ENCODE measurements at regions of chr2 and their contacts with region 1.

Region 1: GRCh38 chr2:27281855-27282559 is at the start of gene TRIM54:
- DNase-seq: no peak
- ATAC-seq: no peak
- H3K4me3 ChIP-seq: no peak within 1 kb of the TSS
- H3K27ac ChIP-seq: no peak within 1 kb of the TSS
- H3K4me1 ChIP-seq: peaks cover 2 to 28% of the 10 kb centered on the region in 2 experiments
- H3K27me3 ChIP-seq: no peaks in the 10 kb centered on the region
- CTCF ChIP-seq: no peak
- POLR2A ChIP-seq: no peak
- RAD21 ChIP-seq: no peak
- total RNA-seq, gene TRIM54: 2.0 TPM

Region 2: GRCh38 chr2:26970244-26970920 is 311.6 kb before region 1 on chr2 and contains the start of gene MAPRE3:
- CTCF ChIA-PET with region 1: no interaction called
- POLR2A ChIA-PET with region 1: no interaction called
- RAD21 ChIA-PET with region 1: no interaction called
- intact Hi-C with region 1: loop called (anchors 5 kb)
- DNase-seq: peak; percentile 53
- ATAC-seq: peak; percentile 94
- H3K4me3 ChIP-seq: peak within 1 kb of the TSS; percentile 44 to 62
- H3K27ac ChIP-seq: no peak within 1 kb of the TSS
- H3K4me1 ChIP-seq: peaks cover 4 to 23% of the 10 kb centered on the region in 2 experiments; a peak in 3 of 4 replicates
- H3K27me3 ChIP-seq: peaks cover 5% of the 10 kb centered on the region; the same call in 1 of the 2 replicates
- CTCF ChIP-seq: no peak
- POLR2A ChIP-seq: no peak
- RAD21 ChIP-seq: no peak
- total RNA-seq, gene MAPRE3: 12.1 TPM

Region 3: DNA sequence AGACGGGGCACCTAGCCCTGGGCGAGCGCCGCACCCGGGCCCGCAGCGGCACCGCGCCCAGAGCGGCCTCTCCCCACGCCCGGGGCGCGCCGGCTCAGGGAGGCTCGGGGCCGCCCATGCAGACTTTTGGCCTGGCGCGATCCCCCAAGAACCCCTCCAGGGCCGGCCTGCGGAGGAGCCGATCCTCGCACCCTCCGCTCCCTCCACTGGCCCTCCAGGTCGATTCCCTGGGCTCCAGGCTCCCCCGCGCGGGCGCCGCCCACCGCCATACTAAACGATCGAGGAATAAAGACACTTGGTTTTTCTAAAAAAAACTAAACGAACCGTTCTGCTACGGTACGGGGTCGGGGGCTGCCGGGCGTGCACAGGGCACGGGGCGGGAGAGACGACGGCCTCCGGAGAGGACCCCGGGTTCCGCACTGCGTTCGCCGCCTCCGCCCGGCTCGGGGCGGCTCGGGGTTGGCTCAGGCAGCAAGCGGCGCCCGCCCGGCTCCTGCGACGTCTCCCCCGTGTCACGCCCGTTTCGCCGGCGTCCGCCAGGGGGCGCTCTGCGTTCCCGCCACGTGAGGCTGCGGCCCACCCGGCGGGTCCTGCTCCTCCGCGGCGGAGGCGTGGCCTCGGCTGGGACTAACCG is 195.8 kb before region 1 on chr2:
- CTCF ChIA-PET with region 1: interaction called, 10 read pairs
- POLR2A ChIA-PET with region 1: no interaction called
- RAD21 ChIA-PET with region 1: no interaction called
- intact Hi-C with region 1: no loop called
- DNase-seq: peak; percentile 77
- ATAC-seq: peak; percentile 85
- H3K4me3 ChIP-seq: peak overlapping the region; percentile 57 to 61
- H3K27ac ChIP-seq: peak overlapping the region; percentile 77
- H3K4me1 ChIP-seq: peaks cover 13 to 35% of the 10 kb centered on the region in 2 experiments
- H3K27me3 ChIP-seq: no peaks in the 10 kb centered on the region
- CTCF ChIP-seq: peak in 2 of 3 experiments; percentile 53 to 73; a peak in 4 of 6 replicates
- POLR2A ChIP-seq: peak; percentile 32
- RAD21 ChIP-seq: no peak

Region 4: DNA sequence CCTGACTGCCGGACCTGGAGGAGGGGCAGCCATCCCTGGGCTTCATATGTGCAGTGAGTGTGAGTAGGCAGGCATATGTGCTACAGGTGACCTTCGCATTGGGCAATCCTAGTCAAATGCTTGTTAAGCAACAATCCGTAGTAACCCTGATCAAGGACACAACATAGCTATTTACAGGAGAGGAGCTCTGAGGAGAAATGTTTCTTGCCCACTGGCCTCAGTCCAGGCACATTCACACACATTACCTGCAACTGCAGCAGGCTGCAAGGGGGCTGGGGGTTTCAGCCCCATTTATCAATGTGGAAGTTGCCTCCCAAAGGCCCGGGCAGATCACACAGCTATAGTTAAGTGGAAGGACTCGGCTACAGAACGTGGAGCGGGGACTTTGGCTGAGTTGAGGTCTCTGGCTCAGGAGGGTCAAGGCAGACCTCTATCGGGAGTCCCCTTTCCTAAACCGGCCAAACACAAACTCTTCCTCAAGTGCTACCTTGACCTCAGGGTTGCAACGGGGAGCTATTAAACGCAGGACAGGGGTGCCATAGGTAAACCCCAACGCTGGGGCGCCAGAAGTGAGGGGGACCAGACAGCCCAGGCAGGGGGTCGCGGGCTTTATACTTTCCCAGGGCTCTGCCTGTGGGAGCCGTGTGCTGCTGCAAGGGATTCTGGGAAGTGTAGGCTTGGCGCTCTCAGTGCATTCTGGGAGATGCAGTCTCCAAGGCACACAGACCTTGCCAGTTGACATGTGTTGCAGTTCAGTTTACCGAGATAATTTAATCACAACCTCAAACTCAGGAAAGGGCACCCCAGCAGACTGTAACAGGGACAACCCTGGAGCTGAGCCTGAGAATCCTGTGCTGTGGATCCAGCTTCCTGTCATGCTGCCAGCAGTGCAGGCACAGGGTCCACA is 186.0 kb before region 1 on chr2:
- CTCF ChIA-PET with region 1: interaction called, 6 read pairs
- POLR2A ChIA-PET with region 1: no interaction called
- RAD21 ChIA-PET with region 1: interaction called in 1 of 2 experiments, 4 read pairs
- intact Hi-C with region 1: loop called (anchors 2 kb)
- DNase-seq: no peak
- ATAC-seq: peak; percentile 88
- H3K4me3 ChIP-seq: no peak overlapping the region
- H3K27ac ChIP-seq: no peak overlapping the region
- H3K4me1 ChIP-seq: peaks cover 0 to 9% of the 10 kb centered on the region in 2 experiments; a peak in 1 of 4 replicates
- H3K27me3 ChIP-seq: no peaks in the 10 kb centered on the region
- CTCF ChIP-seq: no peak
- POLR2A ChIP-seq: peak; percentile 25
- RAD21 ChIP-seq: no peak

Region 5: DNA sequence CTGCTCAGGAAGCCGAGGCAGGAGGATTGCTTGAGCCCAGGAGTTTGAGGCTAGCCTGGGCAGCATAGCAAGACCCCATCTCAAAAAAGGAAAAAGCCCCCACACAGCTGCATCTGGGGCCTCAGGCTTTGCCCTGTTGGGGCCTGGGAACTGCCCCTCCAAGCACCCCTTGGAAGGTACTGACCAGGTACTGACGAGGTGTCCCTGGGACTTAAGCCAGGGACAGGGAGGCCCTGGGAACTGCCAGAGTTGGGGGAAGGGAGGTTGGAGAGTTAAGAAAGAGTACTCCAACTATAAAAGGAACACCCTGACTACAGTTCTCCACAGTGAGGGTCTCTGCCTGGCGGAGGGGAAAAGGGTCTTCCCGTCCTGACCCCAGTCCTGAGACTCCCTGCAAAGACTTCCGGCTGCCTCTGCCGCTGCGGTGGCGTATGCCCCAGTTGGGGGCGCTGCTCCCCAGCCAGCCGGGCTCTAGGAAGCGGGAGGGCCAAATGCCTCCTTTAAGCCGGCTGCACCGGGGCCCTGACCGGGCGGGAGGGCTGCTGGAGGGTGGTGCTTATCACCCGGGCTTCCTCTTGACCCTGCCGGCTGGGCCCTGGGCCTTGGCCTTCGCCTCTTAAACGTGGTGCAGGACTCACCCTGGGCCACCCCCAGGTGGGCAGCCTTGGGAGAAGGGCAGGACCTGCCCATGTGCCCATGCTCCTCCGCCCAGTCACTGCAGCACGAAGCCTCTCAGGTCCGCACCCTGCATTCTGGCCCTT is 31.9 kb before region 1 on chr2:
- CTCF ChIA-PET with region 1: interaction called, 13 read pairs
- POLR2A ChIA-PET with region 1: interaction called, 3 read pairs
- RAD21 ChIA-PET with region 1: interaction called in 1 of 2 experiments, 3 read pairs
- intact Hi-C with region 1: loop called (anchors 1 kb)
- DNase-seq: peak; percentile 23
- ATAC-seq: peak; percentile 89
- H3K4me3 ChIP-seq: no peak overlapping the region
- H3K27ac ChIP-seq: no peak overlapping the region
- H3K4me1 ChIP-seq: peaks cover 0 to 10% of the 10 kb centered on the region in 2 experiments; a peak in 2 of 4 replicates
- H3K27me3 ChIP-seq: no peaks in the 10 kb centered on the region
- CTCF ChIP-seq: peak; percentile 91 to 95 (median 94)
- POLR2A ChIP-seq: no peak
- RAD21 ChIP-seq: peak; percentile 95

Region 6: GRCh38 chr2:27264753-27265535 is 17.1 kb before region 1 on chr2:
- CTCF ChIA-PET with region 1: interaction called, 22 read pairs
- POLR2A ChIA-PET with region 1: interaction called, 5 read pairs
- RAD21 ChIA-PET with region 1: interaction called in 1 of 2 experiments, 3 read pairs
- intact Hi-C with region 1: no loop called
- DNase-seq: peak; percentile 54
- ATAC-seq: peak; percentile 69
- H3K4me3 ChIP-seq: peak overlapping the region; percentile 52 to 84
- H3K27ac ChIP-seq: peak overlapping the region; percentile 45; the same call in 1 of the 2 replicates
- H3K4me1 ChIP-seq: peaks cover 19 to 37% of the 10 kb centered on the region in 2 experiments
- H3K27me3 ChIP-seq: peaks cover 13% of the 10 kb centered on the region; the same call in 1 of the 2 replicates
- CTCF ChIP-seq: peak; percentile 68 to 72 (median 70); a peak in 5 of 6 replicates
- POLR2A ChIP-seq: no peak
- RAD21 ChIP-seq: no peak; the same call in 1 of the 2 replicates

Region 7: GRCh38 chr2:27271631-27272340 is 10.2 kb before region 1 on chr2:
- CTCF ChIA-PET with region 1: interaction called, 22 read pairs
- POLR2A ChIA-PET with region 1: no interaction called
- RAD21 ChIA-PET with region 1: no interaction called
- intact Hi-C with region 1: no loop called
- DNase-seq: no peak
- ATAC-seq: no peak
- H3K4me3 ChIP-seq: no peak overlapping the region
- H3K27ac ChIP-seq: no peak overlapping the region
- H3K4me1 ChIP-seq: peaks cover 0 to 2% of the 10 kb centered on the region in 2 experiments; a peak in 1 of 4 replicates
- H3K27me3 ChIP-seq: no peaks in the 10 kb centered on the region
- CTCF ChIP-seq: no peak
- POLR2A ChIP-seq: no peak
- RAD21 ChIP-seq: no peak